Activated CD4-positive, alpha-beta T cell treated with anti-CD3 and anti-CD28 coated beads, Interleukin-2, amount 10 ng/mL, durations not matched to agents 24 days and 14 days (primary cell): ENCODE measurements at regions of chr15 and their contacts with region 1.

Region 1: DNA sequence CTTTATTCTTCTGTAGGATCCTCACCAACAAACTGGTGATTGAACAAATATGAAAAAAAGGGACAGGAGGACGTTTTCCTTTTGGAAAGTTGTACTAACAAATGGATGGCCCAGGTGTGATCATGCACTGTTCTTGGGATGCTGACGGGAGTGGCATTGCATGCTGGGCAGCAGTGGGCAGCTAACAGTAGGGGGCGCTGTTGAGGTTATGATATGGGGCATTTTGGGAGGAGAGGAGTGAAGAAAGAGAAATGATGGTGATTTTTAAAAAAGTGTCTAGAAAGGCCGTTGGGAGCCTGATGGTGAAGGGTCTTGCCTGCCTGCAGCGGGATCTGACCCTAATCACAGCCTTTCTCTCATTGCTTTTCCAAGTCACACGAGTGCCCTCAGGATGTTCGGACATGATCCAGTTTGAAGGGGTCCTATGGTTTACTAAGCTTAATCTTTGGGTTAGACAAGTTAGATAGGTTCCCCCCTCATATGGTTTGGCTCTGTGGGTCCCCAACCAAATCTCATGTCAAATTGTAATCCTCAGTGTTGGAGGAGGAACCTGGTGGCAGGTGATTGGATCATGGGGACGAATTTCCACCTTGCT is 46.2 kb upstream of the PRTG start:
- DNase-seq: peak; percentile 86
- H3K4me3 Mint-ChIP-seq: no peak overlapping the region
- H3K27ac Mint-ChIP-seq: no peak overlapping the region
- H3K4me1 Mint-ChIP-seq: no peaks in the 10 kb centered on the region
- H3K27me3 Mint-ChIP-seq: no peaks in the 10 kb centered on the region

Region 2: GRCh38 chr15:55742927-55743728 is 46.0 kb before region 1 on chr15 and contains the start of gene PRTG:
- intact Hi-C with region 1: no loop called
- DNase-seq: no peak
- H3K4me3 Mint-ChIP-seq: peak within 1 kb of the TSS; percentile 74
- H3K27ac Mint-ChIP-seq: peak within 1 kb of the TSS; percentile 32
- H3K4me1 Mint-ChIP-seq: no peaks in the 10 kb centered on the region
- H3K27me3 Mint-ChIP-seq: peaks cover 36% of the 10 kb centered on the region
- total RNA-seq, gene PRTG: not detected in 2 replicates

Region 3: DNA sequence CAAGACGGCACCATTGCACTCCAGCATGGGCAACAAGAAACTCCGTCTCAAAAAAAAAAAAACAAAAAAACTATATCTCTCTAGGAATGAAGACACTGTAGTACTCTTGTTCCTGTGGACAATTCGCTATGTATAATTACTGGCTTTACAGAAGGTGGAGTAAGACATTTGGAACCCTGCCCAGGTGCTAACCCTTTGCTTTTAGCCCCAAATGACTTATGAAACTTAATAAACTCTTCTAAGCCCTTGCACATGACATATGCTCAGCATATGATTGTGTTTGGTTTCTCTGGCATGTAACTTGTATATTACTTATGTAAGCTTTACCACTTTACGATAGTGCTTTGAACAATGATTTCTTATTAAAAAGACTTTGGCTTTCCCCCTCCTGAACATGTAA is 18.9 kb before region 1 on chr15:
- intact Hi-C with region 1: no loop called
- DNase-seq: no peak
- H3K4me3 Mint-ChIP-seq: no peak overlapping the region
- H3K27ac Mint-ChIP-seq: no peak overlapping the region
- H3K4me1 Mint-ChIP-seq: no peaks in the 10 kb centered on the region
- H3K27me3 Mint-ChIP-seq: peaks cover 16% of the 10 kb centered on the region

Region 4: DNA sequence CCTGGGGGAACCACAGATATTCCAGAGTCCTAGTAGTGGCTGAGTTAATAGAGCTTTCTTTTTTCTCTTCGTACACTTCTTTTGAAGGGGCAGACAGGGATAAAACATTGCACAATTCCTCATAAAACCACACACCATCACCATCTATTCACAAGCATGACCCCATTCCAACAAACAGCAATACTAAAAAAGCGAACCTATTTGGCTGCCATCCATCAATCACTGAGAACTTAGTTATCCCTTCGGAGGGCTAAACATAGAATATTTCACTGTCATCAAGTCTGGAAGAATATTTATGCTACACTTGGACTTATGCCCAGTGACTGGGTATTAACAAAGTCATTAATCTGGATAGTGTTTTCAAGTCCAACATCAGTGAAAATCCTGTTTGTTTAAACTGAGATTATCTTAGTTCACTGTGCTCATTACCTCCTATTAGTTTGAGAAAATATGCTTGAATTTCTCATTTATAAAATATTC is 34.1 kb after region 1 on chr15:
- intact Hi-C with region 1: no loop called
- DNase-seq: no peak
- H3K4me3 Mint-ChIP-seq: no peak overlapping the region
- H3K27ac Mint-ChIP-seq: no peak overlapping the region
- H3K4me1 Mint-ChIP-seq: peaks cover 3% of the 10 kb centered on the region
- H3K27me3 Mint-ChIP-seq: peaks cover 3% of the 10 kb centered on the region

Region 5: GRCh38 chr15:55846116-55846707 is 57.0 kb after region 1 on chr15:
- intact Hi-C with region 1: loop called (anchors 1 kb)
- DNase-seq: peak; percentile 90
- H3K4me3 Mint-ChIP-seq: no peak overlapping the region
- H3K27ac Mint-ChIP-seq: no peak overlapping the region
- H3K4me1 Mint-ChIP-seq: no peaks in the 10 kb centered on the region
- H3K27me3 Mint-ChIP-seq: no peaks in the 10 kb centered on the region

Region 6: GRCh38 chr15:56052395-56053045 is 263.4 kb after region 1 on chr15:
- intact Hi-C with region 1: loop called (anchors 5 kb)
- DNase-seq: no peak
- H3K4me3 Mint-ChIP-seq: no peak overlapping the region
- H3K27ac Mint-ChIP-seq: no peak overlapping the region
- H3K4me1 Mint-ChIP-seq: peaks cover 3% of the 10 kb centered on the region
- H3K27me3 Mint-ChIP-seq: peaks cover 2% of the 10 kb centered on the region